ENCODE measurements at regions of chr6 and their contacts with region 1.

Region 1: DNA sequence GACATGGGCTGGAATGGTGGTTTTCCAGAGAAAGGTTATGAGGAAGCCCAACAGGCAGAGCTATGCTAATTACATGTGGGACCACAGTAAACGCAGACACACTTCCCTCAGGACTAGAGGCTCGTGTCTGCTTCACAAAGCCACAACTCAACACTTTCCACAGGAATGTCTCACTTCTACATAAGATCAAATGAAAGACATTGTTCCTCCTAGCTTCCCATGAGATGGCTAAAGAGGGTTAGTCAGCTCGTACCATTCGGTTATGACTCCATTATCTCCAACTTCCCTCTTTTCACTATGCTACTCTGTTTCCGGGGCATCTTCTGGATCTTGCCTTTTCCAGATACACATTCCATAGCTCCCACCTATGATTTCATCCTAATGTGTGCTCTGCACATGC is 29.1 kb upstream of the ZC3H12D start:
- DNase-seq: no peak
- ATAC-seq: no peak
- H3K4me3 Mint-ChIP-seq: no peak overlapping the region
- H3K27ac Mint-ChIP-seq: no peak overlapping the region
- H3K4me1 Mint-ChIP-seq: peaks cover 10% of the 10 kb centered on the region
- H3K27me3 Mint-ChIP-seq: no peaks in the 10 kb centered on the region

Region 2: DNA sequence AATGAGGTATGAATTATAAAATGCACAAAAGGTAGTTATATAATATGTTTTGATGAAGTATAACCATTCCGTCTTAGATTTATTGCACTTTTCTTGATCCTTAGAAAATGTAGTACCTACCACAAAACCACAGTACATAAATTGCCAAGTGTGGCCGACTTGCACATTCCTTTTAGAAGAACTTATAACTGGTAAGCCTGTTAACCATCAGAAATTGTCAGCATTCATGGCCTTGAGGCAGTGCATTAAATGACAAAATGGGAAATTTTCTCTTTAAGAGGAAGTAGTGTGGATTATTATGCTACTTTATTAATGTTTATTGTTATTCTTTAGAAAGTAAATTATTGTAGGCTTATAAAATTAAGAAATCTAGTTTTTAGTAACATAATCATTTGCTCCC is 166.8 kb before region 1 on chr6:
- CTCF ChIA-PET with region 1: no interaction called
- POLR2A ChIA-PET with region 1: no interaction called
- DNase-seq: no peak
- ATAC-seq: no peak
- H3K4me3 Mint-ChIP-seq: no peak overlapping the region
- H3K27ac Mint-ChIP-seq: no peak overlapping the region
- H3K4me1 Mint-ChIP-seq: peaks cover 51% of the 10 kb centered on the region
- H3K27me3 Mint-ChIP-seq: no peaks in the 10 kb centered on the region

Region 3: GRCh38 chr6:149443411-149444181 is 70.3 kb before region 1 on chr6:
- CTCF ChIA-PET with region 1: interaction called, 29 read pairs
- POLR2A ChIA-PET with region 1: no interaction called
- DNase-seq: no peak
- ATAC-seq: no peak
- H3K4me3 Mint-ChIP-seq: no peak overlapping the region
- H3K27ac Mint-ChIP-seq: no peak overlapping the region
- H3K4me1 Mint-ChIP-seq: peaks cover 9% of the 10 kb centered on the region
- H3K27me3 Mint-ChIP-seq: no peaks in the 10 kb centered on the region

Region 4: GRCh38 chr6:149484733-149485700 is 28.9 kb before region 1 on chr6 and contains the start of gene ZC3H12D:
- CTCF ChIA-PET with region 1: interaction called, 7 read pairs
- POLR2A ChIA-PET with region 1: interaction called, 13 read pairs
- DNase-seq: peak; percentile 82
- ATAC-seq: peak; percentile 78
- H3K4me3 Mint-ChIP-seq: peak within 1 kb of the TSS; percentile 84
- H3K27ac Mint-ChIP-seq: peak within 1 kb of the TSS; percentile 95
- H3K4me1 Mint-ChIP-seq: peaks cover 59% of the 10 kb centered on the region
- H3K27me3 Mint-ChIP-seq: no peaks in the 10 kb centered on the region
- total RNA-seq, gene ZC3H12D: 6.0 to 6.1 TPM

Region 5: GRCh38 chr6:149499066-149499465 is 14.8 kb before region 1 on chr6:
- CTCF ChIA-PET with region 1: interaction called, 43 read pairs
- POLR2A ChIA-PET with region 1: interaction called, 6 read pairs
- DNase-seq: no peak
- ATAC-seq: no peak
- H3K4me3 Mint-ChIP-seq: no peak overlapping the region
- H3K27ac Mint-ChIP-seq: no peak overlapping the region
- H3K4me1 Mint-ChIP-seq: peaks cover 35% of the 10 kb centered on the region
- H3K27me3 Mint-ChIP-seq: no peaks in the 10 kb centered on the region

Measured in activated CD8-positive, alpha-beta T cell treated with anti-CD3 and anti-CD28 coated beads, Interleukin-2, amount 10 ng/mL, durations not matched to agents 7 days and 5 days (primary cell).